ENCODE measurements at regions of chr15 and their contacts with region 1.

Region 1: GRCh38 chr15:70679919-70680231 is 83.5 kb downstream of the UACA start:
- DNase-seq: no peak
- H3K4me3 ChIP-seq: no peak overlapping the region
- H3K27ac ChIP-seq: no peak overlapping the region
- H3K4me1 ChIP-seq: peaks cover 0 to 6% (median 0%) of the 10 kb centered on the region in 4 donors
- H3K27me3 ChIP-seq: no peaks in the 10 kb centered on the region
- CTCF ChIP-seq: peak in 2 of 5 experiments; percentile 2 to 16
- EP300 ChIP-seq: no peak
- POLR2A ChIP-seq: no peak

Region 2: GRCh38 chr15:69380100-69380727 is 1299.7 kb before region 1 on chr15:
- in situ Hi-C with region 1: no loop called
- intact Hi-C with region 1: no loop called
- DNase-seq: no peak
- H3K4me3 ChIP-seq: no peak overlapping the region
- H3K27ac ChIP-seq: no peak overlapping the region
- H3K4me1 ChIP-seq: no peaks in the 10 kb centered on the region
- H3K27me3 ChIP-seq: no peaks in the 10 kb centered on the region
- CTCF ChIP-seq: no peak
- EP300 ChIP-seq: no peak
- POLR2A ChIP-seq: no peak

Region 3: DNA sequence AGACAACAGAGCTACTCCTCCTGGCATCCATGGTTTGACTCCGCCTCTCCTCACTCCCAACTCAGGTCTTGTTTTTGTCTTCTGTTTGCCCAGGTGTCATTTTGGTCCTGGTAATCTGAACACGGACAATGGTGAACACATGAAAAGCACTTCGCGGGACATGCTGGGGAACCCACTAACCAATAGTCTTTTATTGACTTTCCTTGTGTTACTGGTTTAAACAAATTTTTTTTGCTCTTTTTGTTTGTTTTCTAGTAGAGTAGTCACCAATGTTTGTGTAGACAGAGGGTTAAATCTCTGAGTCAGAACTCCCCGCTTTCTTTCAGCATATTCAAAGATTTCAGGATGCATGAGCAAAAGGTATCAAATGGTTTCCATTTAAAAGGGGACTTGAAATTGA is 135.8 kb after region 1 on chr15:
- in situ Hi-C with region 1: loop called in 3 of 4 experiments (anchors 10 kb)
- intact Hi-C with region 1: no loop called
- DNase-seq: no peak
- H3K4me3 ChIP-seq: no peak overlapping the region
- H3K27ac ChIP-seq: no peak overlapping the region
- H3K4me1 ChIP-seq: peaks cover 0 to 10% (median 0%) of the 10 kb centered on the region in 4 donors
- H3K27me3 ChIP-seq: peaks cover 4% of the 10 kb centered on the region
- CTCF ChIP-seq: no peak
- EP300 ChIP-seq: no peak
- POLR2A ChIP-seq: no peak

Measured in transverse colon (tissue), 4 donors.